Panc1 (cell line): ENCODE measurements at regions of chr9 and their contacts with region 1.

Region 1: DNA sequence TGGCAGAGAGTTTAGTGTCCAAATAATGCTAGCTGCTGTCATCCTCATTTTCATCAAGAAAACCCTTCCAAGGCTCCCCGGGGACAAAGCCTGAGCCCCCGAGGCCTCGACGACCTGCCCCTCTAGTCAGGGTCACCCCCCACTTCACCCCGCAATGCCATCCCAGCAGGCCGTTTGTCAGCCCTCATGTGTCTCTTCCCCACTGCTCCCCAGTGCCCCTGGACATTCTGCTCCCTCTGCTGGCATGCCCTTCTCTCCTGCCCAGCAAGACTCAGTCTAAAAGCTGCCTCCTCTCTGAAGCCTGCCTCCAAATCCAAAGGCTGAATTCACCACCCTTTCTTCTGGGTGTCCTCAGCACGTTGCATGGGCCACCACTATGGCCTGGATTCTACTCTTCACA is 59.3 kb downstream of the PAX5 start:
- DNase-seq: no peak
- ATAC-seq: peak; percentile 81
- H3K4me3 ChIP-seq: no peak overlapping the region
- H3K27ac ChIP-seq: no peak overlapping the region
- H3K4me1 ChIP-seq: no peaks in the 10 kb centered on the region
- H3K27me3 ChIP-seq: no peaks in the 10 kb centered on the region
- CTCF ChIP-seq: no peak

Region 2: GRCh38 chr9:36924071-36924470 is 50.7 kb before region 1 on chr9:
- CTCF ChIA-PET with region 1: no interaction called
- POLR2A ChIA-PET with region 1: no interaction called
- in situ Hi-C with region 1: no loop called
- intact Hi-C with region 1: loop called (anchors 2 kb)
- DNase-seq: peak; percentile 87
- ATAC-seq: peak; percentile 74
- H3K4me3 ChIP-seq: no peak overlapping the region
- H3K27ac ChIP-seq: peak overlapping the region; percentile 73
- H3K4me1 ChIP-seq: peaks cover 51% of the 10 kb centered on the region
- H3K27me3 ChIP-seq: no peaks in the 10 kb centered on the region
- CTCF ChIP-seq: no peak

Region 3: DNA sequence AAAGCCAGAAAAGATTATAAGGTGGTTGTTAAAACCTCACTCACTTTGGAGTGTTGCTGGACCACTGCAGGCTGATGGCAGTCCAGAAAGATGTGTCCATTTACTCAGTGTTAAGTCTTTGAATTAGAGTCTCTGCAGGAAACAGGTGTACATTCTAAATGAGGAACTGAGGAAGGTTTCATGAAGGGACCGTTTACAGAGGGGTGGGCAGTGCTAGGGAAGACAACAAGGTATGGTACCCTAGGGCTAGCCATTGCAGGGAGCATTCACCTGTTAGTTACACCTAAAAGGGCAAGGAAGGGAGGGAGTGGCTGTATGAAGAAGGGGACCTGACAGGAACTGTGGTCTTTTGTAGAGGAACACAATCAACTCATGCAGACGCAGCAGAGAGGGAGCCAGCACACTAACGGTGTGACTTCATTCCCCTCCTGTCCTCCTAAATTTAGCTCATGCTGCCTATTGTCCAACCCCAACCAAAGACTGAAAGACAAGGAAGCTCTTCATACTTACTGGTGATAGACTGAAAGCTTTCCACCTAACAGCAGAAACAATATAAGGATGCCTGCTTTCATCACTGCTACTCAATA is 91.5 kb after region 1 on chr9:
- CTCF ChIA-PET with region 1: no interaction called
- POLR2A ChIA-PET with region 1: no interaction called
- in situ Hi-C with region 1: no loop called
- intact Hi-C with region 1: no loop called
- DNase-seq: no peak
- ATAC-seq: no peak
- H3K4me3 ChIP-seq: no peak overlapping the region
- H3K27ac ChIP-seq: no peak overlapping the region
- H3K4me1 ChIP-seq: no peaks in the 10 kb centered on the region
- H3K27me3 ChIP-seq: peaks cover 30% of the 10 kb centered on the region
- CTCF ChIP-seq: no peak